ENCODE measurements at regions of chr6 and their contacts with region 1.

Region 1: DNA sequence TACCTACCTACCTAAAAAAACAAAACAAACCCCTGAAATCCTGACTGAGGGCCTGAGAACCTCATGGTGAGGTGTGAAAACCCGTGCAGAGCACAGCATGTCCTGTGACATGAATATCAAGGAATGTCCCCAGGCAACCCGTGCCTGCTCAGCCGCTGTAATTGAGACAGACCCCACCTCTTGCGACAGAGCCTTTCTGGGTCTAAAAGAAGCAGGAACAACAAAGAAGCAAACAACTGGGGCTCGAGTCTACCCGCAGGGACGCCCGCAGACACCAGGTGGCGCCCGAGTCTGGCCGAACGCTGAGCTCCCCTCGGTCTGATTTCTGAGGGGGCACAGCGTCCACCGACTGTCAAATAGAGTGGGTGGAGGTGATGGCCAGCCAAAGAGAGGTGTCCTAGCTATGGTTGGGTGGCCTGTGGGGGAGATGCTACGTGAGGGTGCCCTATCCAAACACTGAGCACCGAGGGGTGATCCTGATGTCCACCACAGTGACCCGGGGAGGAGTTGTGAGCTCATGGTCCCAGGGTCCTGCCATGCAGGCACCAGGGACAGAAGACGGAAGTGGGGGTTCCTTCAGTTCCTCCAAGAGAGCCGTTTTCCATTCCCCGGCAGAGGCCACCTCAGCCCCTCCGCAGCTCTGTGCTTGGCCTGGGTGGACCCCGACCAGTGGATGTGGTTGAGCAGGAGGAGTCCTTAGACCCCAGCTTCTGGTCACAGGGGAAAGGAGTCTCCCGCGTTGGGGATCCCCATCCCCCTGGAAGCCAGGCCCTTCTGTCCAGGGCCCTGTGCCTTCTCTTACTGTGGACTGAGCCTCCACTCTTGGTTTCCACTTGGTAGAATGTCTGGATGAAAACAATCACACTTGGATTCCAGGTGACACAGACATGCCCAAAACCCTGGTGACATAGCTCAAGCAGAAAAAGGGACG is 268.2 kb downstream of the CDC5L start:
- DNase-seq: peak; percentile 61 to 68 (median 62)
- H3K4me3 ChIP-seq: no peak overlapping the region
- H3K4me3 Mint-ChIP-seq: peak overlapping the region in 7 of 8 donors; percentile 34 to 76 (median 61)
- H3K27ac ChIP-seq: peak overlapping the region; percentile 6
- H3K27ac Mint-ChIP-seq: peak overlapping the region; percentile 30 to 94 (median 85)
- H3K4me1 ChIP-seq: peaks cover 8% of the 10 kb centered on the region
- H3K4me1 Mint-ChIP-seq: peaks cover 5 to 12% (median 6%) of the 10 kb centered on the region in 4 donors
- H3K27me3 ChIP-seq: no peaks in the 10 kb centered on the region
- H3K27me3 Mint-ChIP-seq: peaks cover 0 to 3% of the 10 kb centered on the region in 2 donors

Region 2: GRCh38 chr6:44475779-44476434 is 179.8 kb before region 1 on chr6:
- CTCF ChIA-PET with region 1: interaction called, 18 read pairs
- POLR2A ChIA-PET with region 1: no interaction called
- intact Hi-C with region 1: no loop called
- DNase-seq: peak; percentile 47 to 66 (median 63)
- H3K4me3 ChIP-seq: no peak overlapping the region
- H3K4me3 Mint-ChIP-seq: no peak overlapping the region
- H3K27ac ChIP-seq: no peak overlapping the region
- H3K27ac Mint-ChIP-seq: no peak overlapping the region
- H3K4me1 ChIP-seq: peaks cover 6% of the 10 kb centered on the region
- H3K4me1 Mint-ChIP-seq: peaks cover 0 to 5% (median 2%) of the 10 kb centered on the region in 4 donors
- H3K27me3 ChIP-seq: no peaks in the 10 kb centered on the region
- H3K27me3 Mint-ChIP-seq: peaks cover 2 to 3% of the 10 kb centered on the region in 2 donors

Region 3: GRCh38 chr6:45297320-45297719 is 641.6 kb after region 1 on chr6:
- CTCF ChIA-PET with region 1: interaction called, 3 read pairs
- POLR2A ChIA-PET with region 1: no interaction called
- intact Hi-C with region 1: loop called (anchors 10 kb)
- DNase-seq: no peak
- H3K4me3 ChIP-seq: no peak overlapping the region
- H3K4me3 Mint-ChIP-seq: no peak overlapping the region
- H3K27ac ChIP-seq: no peak overlapping the region
- H3K27ac Mint-ChIP-seq: peak overlapping the region in 1 of 7 donors; percentile 25
- H3K4me1 ChIP-seq: peaks cover 21% of the 10 kb centered on the region
- H3K4me1 Mint-ChIP-seq: peaks cover 21 to 31% (median 29%) of the 10 kb centered on the region in 4 donors
- H3K27me3 ChIP-seq: no peaks in the 10 kb centered on the region
- H3K27me3 Mint-ChIP-seq: no peaks in the 10 kb centered on the region

Region 4: GRCh38 chr6:45377554-45378333 is 722.1 kb after region 1 on chr6 and contains the start of gene SUPT3H:
- CTCF ChIA-PET with region 1: interaction called, 17 read pairs
- POLR2A ChIA-PET with region 1: interaction called, 3 read pairs
- intact Hi-C with region 1: loop called (anchors 1 kb)
- DNase-seq: peak; percentile 88 to 96 (median 90)
- H3K4me3 ChIP-seq: peak within 1 kb of the TSS; percentile 72 to 96
- H3K4me3 Mint-ChIP-seq: peak within 1 kb of the TSS; percentile 93 to 99 (median 96)
- H3K27ac ChIP-seq: peak within 1 kb of the TSS; percentile 96
- H3K27ac Mint-ChIP-seq: peak within 1 kb of the TSS; percentile 95 to 99 (median 98)
- H3K4me1 ChIP-seq: peaks cover 17% of the 10 kb centered on the region
- H3K4me1 Mint-ChIP-seq: peaks cover 8 to 30% (median 19%) of the 10 kb centered on the region in 4 donors
- H3K27me3 ChIP-seq: no peaks in the 10 kb centered on the region
- H3K27me3 Mint-ChIP-seq: no peaks in the 10 kb centered on the region
- total RNA-seq, gene SUPT3H: 11.8 to 12.6 TPM

Region 5: GRCh38 chr6:46419576-46420002 is 1763.9 kb after region 1 on chr6:
- CTCF ChIA-PET with region 1: interaction called, 3 read pairs
- POLR2A ChIA-PET with region 1: no interaction called
- intact Hi-C with region 1: loop called (anchors 10 kb)
- DNase-seq: peak in 3 of 5 donors; percentile 3 to 5 (median 4)
- H3K4me3 ChIP-seq: no peak overlapping the region
- H3K4me3 Mint-ChIP-seq: no peak overlapping the region
- H3K27ac ChIP-seq: no peak overlapping the region
- H3K27ac Mint-ChIP-seq: no peak overlapping the region
- H3K4me1 ChIP-seq: no peaks in the 10 kb centered on the region
- H3K4me1 Mint-ChIP-seq: no peaks in the 10 kb centered on the region
- H3K27me3 ChIP-seq: no peaks in the 10 kb centered on the region
- H3K27me3 Mint-ChIP-seq: peaks cover 5 to 13% of the 10 kb centered on the region in 2 donors